Activated B cell treated with CpG ODN at 0.5 μM for 24 hours (primary cell): ENCODE measurements at regions of chr13 and their contacts with region 1.

Region 1: GRCh38 chr13:99528547-99528946 is 27.3 kb downstream of the TM9SF2 start:
- DNase-seq: no peak
- ATAC-seq: peak; percentile 79
- H3K4me3 Mint-ChIP-seq: no peak overlapping the region
- H3K27ac Mint-ChIP-seq: no peak overlapping the region
- H3K4me1 Mint-ChIP-seq: peaks cover 16% of the 10 kb centered on the region
- H3K27me3 Mint-ChIP-seq: no peaks in the 10 kb centered on the region
- CTCF ChIP-seq: no peak

Region 2: DNA sequence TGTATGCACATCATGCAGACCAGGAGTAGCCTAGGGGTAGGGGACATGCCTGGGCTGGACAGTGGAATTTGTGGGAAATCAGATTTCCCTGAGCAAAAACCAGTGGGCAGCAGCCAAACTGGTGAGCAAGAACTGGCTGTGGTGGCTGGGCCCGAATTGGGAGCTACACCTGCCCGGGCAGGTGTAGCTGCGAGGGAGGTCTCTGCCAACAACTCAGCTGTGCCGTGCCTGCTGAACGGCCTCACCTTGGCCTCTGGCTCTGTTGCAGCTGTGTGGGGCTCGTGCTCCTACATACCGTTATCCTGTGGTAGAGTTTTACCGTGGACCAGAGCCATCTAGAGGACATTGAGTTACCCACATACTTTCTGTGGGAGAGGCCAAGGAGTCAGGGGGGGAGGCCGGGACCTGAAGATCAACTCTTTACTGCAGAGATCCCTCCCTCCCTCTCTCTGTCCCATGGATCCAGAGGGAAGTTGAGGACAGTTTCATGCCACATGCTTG is 85.9 kb after region 1 on chr13:
- CTCF ChIA-PET with region 1: interaction called, 16 read pairs
- POLR2A ChIA-PET with region 1: no interaction called
- intact Hi-C with region 1: loop called (anchors 1 kb)
- DNase-seq: no peak
- ATAC-seq: peak; percentile 98
- H3K4me3 Mint-ChIP-seq: no peak overlapping the region
- H3K27ac Mint-ChIP-seq: no peak overlapping the region
- H3K4me1 Mint-ChIP-seq: peaks cover 26% of the 10 kb centered on the region
- H3K27me3 Mint-ChIP-seq: no peaks in the 10 kb centered on the region
- CTCF ChIP-seq: no peak

Region 3: DNA sequence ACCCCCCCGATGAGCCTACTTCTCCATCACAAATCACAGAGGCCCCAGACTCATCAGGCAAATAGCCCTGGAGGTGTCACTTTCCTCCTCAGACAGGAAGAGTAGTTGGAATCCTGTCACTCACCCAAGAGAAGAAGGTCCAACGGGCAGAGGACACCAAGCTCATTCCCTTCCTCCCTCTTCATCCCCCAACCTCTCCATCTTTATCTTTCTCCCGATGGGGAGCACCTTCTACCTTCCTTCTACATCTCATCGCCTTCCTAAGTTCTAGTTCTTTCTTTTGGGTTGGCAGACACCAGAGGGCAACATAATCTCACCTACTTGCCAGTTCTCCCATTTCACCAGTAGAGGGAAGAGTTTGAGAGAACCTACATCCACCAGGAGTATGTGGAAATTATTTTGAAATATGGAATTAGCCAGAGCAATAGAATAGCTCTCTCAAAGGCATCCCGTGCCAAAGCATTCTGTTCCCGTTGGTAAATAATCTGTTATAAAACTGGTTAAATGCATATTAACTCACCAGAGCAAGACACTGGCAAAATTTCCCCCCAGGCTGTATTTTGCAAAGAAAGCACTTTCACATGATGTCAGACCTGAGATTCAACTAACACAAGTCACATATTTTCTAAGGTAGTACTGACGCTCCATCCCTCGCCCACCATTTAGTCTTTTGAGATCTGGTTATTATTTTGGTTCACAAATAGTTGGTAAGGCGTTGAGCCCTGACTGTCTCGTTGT is 388.0 kb after region 1 on chr13:
- CTCF ChIA-PET with region 1: no interaction called
- POLR2A ChIA-PET with region 1: no interaction called
- intact Hi-C with region 1: loop called (anchors 1 kb)
- DNase-seq: no peak
- ATAC-seq: peak; percentile 56
- H3K4me3 Mint-ChIP-seq: no peak overlapping the region
- H3K27ac Mint-ChIP-seq: no peak overlapping the region
- H3K4me1 Mint-ChIP-seq: peaks cover 1% of the 10 kb centered on the region
- H3K27me3 Mint-ChIP-seq: peaks cover 25% of the 10 kb centered on the region
- CTCF ChIP-seq: peak; percentile 62